A673 (cell line): ENCODE measurements at regions of chr16 and their contacts with region 1.

Region 1: GRCh38 chr16:401468-402348 is at the start of gene DECR2:
- DNase-seq: peak; percentile 94
- H3K4me3 ChIP-seq: peak within 1 kb of the TSS; percentile 62
- H3K27ac ChIP-seq: peak within 1 kb of the TSS; percentile 91
- H3K4me1 ChIP-seq: peaks cover 17% of the 10 kb centered on the region
- H3K27me3 ChIP-seq: no peaks in the 10 kb centered on the region
- CTCF ChIP-seq: peak; percentile 63
- total RNA-seq, gene DECR2: 27.5 and 28.7 TPM in 2 replicates

Region 2: DNA sequence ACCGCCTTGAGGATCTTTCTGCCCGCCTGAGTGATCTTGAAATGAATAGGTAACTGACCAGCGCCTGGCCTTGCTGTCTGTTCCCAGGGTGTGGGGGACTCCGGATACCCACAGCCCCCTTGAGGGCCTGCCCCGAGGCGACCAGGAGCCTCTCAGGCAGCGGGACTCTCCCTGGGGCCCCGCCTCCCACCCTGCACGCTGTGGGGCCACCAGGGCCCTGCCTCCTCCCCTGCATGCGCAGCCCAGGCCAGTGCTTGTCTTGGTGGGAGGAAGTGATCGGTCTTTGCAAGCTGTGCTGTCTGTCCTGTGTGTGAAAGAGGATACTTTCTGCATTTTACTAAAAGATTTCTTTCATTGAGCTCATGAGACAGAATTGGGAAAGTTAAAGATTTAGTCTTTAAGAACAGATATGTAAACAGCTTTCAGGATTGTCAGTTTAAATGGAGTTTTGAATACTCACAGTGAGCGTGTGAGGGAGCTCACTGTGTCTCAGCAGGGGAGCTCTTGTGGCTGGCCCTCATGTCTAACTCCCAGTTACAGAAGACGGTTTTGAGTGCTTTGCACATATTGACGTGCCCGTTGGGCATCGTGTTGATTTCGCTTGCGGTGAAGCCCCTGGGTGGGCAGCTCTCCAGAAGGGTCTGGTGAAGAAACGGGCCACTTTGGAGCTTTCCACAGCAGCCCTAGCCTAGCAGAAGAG is 89.7 kb after region 1 on chr16:
- CTCF ChIA-PET with region 1: no interaction called
- POLR2A ChIA-PET with region 1: no interaction called
- intact Hi-C with region 1: loop called (anchors 5 kb)
- DNase-seq: no peak
- H3K4me3 ChIP-seq: no peak overlapping the region
- H3K27ac ChIP-seq: no peak overlapping the region
- H3K4me1 ChIP-seq: no peaks in the 10 kb centered on the region
- H3K27me3 ChIP-seq: no peaks in the 10 kb centered on the region
- CTCF ChIP-seq: no peak

Region 3: GRCh38 chr16:527006-527753 is 125.5 kb after region 1 on chr16 and contains the start of gene CAPN15:
- CTCF ChIA-PET with region 1: no interaction called
- POLR2A ChIA-PET with region 1: interaction called, 11 read pairs
- intact Hi-C with region 1: loop called (anchors 5 kb)
- DNase-seq: peak; percentile 93
- H3K4me3 ChIP-seq: peak within 1 kb of the TSS; percentile 96
- H3K27ac ChIP-seq: peak within 1 kb of the TSS; percentile 98
- H3K4me1 ChIP-seq: peaks cover 7% of the 10 kb centered on the region
- H3K27me3 ChIP-seq: no peaks in the 10 kb centered on the region
- CTCF ChIP-seq: no peak
- total RNA-seq, gene CAPN15: 77.7 and 91.2 TPM in 2 replicates